Activated naive CD4-positive, alpha-beta T cell treated with anti-CD3 and anti-CD28 coated beads for 36 hours (primary cell): ENCODE measurements at regions of chr2 and their contacts with region 1.

Region 1: GRCh38 chr2:206085742-206086445 is at the start of gene INO80D:
- DNase-seq: peak; percentile 86
- H3K4me3 Mint-ChIP-seq: peak within 1 kb of the TSS; percentile 97
- H3K27ac Mint-ChIP-seq: peak within 1 kb of the TSS; percentile 100
- H3K4me1 Mint-ChIP-seq: peaks cover 35% of the 10 kb centered on the region
- H3K27me3 Mint-ChIP-seq: no peaks in the 10 kb centered on the region
- total RNA-seq, gene INO80D: 14.8 to 15.0 TPM

Region 2: GRCh38 chr2:205270689-205271088 is 815.2 kb before region 1 on chr2:
- CTCF ChIA-PET with region 1: no interaction called
- intact Hi-C with region 1: no loop called
- DNase-seq: no peak
- H3K4me3 Mint-ChIP-seq: no peak overlapping the region
- H3K27ac Mint-ChIP-seq: no peak overlapping the region
- H3K4me1 Mint-ChIP-seq: peaks cover 1% of the 10 kb centered on the region
- H3K27me3 Mint-ChIP-seq: no peaks in the 10 kb centered on the region

Region 3: GRCh38 chr2:205763708-205764211 is 322.1 kb before region 1 on chr2:
- CTCF ChIA-PET with region 1: no interaction called
- intact Hi-C with region 1: no loop called
- DNase-seq: peak; percentile 47
- H3K4me3 Mint-ChIP-seq: no peak overlapping the region
- H3K27ac Mint-ChIP-seq: no peak overlapping the region
- H3K4me1 Mint-ChIP-seq: peaks cover 2% of the 10 kb centered on the region
- H3K27me3 Mint-ChIP-seq: peaks cover 15% of the 10 kb centered on the region

Region 4: GRCh38 chr2:206031162-206031784 is 54.6 kb before region 1 on chr2:
- CTCF ChIA-PET with region 1: interaction called, 4 read pairs
- intact Hi-C with region 1: loop called (anchors 1 kb)
- DNase-seq: no peak
- H3K4me3 Mint-ChIP-seq: no peak overlapping the region
- H3K27ac Mint-ChIP-seq: no peak overlapping the region
- H3K4me1 Mint-ChIP-seq: peaks cover 58% of the 10 kb centered on the region
- H3K27me3 Mint-ChIP-seq: no peaks in the 10 kb centered on the region

Region 5: DNA sequence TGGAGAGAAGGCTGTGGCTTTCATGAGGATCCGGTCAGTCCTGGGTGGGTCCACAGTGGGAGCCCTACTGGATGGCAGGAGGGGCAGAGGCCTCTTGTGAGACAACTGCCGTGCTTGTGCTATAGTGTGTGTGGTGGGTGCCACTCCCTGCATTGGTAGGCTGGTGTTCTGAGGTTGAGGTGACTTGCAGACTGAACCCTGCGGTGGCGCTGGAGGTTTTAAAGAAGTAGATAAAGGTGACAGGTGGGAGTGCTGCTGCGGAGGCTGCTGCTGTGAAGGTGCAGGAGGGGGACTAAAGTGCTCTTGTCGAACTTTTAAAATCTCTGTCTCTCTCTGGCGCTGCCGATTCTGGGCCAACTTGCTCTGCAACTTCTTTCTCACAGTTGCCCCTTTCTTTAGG is 29.6 kb before region 1 on chr2:
- CTCF ChIA-PET with region 1: no interaction called
- intact Hi-C with region 1: no loop called
- DNase-seq: no peak
- H3K4me3 Mint-ChIP-seq: no peak overlapping the region
- H3K27ac Mint-ChIP-seq: no peak overlapping the region
- H3K4me1 Mint-ChIP-seq: peaks cover 10% of the 10 kb centered on the region
- H3K27me3 Mint-ChIP-seq: no peaks in the 10 kb centered on the region

Region 6: DNA sequence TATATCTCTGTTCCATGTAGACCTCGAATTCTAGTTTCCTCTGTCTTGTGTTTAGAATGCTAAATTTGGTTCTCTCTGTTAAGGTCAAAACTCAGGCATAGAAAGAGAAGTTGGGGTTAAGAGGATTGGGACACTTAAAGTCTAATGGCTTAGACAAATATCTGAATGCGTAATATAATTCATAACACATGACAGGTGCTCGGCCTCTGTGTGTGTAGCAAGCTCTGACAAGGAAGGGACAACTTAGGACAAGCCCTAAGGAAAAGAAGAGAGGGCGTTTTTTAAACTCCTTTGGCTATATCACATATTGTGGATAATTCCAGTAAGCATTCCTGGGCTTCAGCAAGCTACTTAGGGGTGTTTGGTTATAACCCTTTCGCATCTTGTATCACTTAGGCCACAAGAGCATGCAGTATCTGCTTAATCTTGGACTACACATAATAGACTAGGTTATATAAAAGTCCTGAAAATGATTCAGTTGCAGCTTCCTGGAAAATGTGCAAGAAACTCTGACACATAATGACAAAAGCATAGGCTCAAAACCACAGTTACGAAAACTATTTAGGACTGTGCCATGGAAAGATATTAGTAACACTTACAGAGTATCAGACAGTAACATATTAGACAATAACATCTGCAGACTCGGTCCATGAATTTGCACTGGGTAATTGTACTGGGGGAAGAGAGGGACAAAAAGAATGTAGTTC is 1427.8 kb after region 1 on chr2:
- CTCF ChIA-PET with region 1: no interaction called
- intact Hi-C with region 1: loop called (anchors 5 kb)
- DNase-seq: no peak
- H3K4me3 Mint-ChIP-seq: no peak overlapping the region
- H3K27ac Mint-ChIP-seq: peak overlapping the region; percentile 77
- H3K4me1 Mint-ChIP-seq: peaks cover 39% of the 10 kb centered on the region
- H3K27me3 Mint-ChIP-seq: no peaks in the 10 kb centered on the region